Posterior vena cava (tissue), 2 donors: ENCODE measurements at regions of chr3 and their contacts with region 1.

Region 1: DNA sequence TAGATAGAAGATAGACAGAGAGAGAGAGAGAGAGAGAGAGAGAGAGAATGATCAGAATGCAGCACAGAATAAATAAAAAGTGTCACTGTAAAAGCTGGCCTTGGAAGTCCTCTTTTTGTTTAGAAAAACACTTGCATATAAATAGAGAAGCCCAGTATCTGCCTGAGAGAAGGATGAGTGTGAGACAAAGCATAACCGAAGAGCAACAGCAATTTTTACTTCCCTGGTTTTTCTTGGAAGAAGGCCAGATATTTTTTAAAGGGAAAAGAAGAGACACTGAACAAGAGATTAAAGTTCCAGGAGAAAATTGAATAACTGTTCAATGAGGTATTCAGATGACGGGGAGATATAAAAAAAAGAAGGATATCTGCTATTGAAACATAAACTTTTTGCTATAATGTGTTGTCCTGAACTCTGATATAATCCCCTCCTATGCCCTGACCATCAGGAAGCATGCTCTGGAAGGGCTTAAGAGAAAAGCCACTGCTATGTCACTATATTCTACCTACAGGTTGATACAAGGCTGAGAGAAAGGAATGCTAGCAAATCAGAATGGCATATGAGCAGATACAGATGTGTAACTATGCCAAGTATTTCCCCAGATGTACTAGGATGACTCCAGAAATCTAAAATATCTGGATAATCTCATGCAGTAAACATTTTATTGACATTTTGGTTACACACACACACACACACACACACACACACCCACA is 358.9 kb downstream of the RBMS3 start:
- DNase-seq: no peak

Region 2: GRCh38 chr3:29655015-29655747 is 15.4 kb after region 1 on chr3:
- intact Hi-C with region 1: loop called in 1 of 2 experiments (anchors 2 kb)
- DNase-seq: no peak

Region 3: DNA sequence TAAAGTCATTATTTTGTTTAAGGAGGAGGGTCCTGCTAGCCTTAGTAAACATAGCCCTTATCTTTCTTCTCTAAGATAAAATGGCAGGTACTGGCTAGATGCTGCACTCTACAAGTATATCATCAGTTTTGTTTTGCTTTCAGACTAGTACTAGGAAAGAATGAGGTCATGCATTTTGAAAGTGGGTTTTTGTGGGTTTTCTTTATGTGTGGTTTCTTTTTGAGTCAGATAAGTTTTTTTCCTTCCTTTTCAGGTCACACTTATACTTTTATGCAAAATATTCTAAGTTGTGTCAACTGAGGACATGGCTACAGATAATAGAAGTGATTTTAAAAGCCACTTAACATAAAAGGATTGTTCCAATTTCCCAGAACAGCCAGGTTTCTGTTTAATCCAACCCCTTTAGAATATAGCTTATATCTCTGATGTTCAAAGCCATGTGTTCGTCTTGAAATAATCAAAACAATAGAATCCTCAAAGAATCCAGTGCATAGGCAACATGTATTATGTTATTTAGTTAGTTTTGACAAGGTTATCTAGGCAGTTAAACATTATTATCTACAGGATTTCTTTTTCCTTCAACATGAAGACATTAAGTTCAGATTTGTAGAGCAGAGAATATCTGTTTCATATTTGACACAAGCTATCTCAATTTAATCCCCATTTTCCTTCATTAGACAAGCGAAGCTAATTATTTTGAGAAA is 47.3 kb after region 1 on chr3:
- intact Hi-C with region 1: no loop called
- DNase-seq: no peak

Region 4: GRCh38 chr3:29711255-29711771 is 71.6 kb after region 1 on chr3:
- intact Hi-C with region 1: no loop called
- DNase-seq: no peak